GM10248 (cell line): ENCODE measurements at regions of chr11 and their contacts with region 1.

Region 1: GRCh38 chr11:34830648-34831047 is 85.5 kb downstream of the APIP start:
- DNase-seq: no peak
- CTCF ChIP-seq: no peak

Region 2: DNA sequence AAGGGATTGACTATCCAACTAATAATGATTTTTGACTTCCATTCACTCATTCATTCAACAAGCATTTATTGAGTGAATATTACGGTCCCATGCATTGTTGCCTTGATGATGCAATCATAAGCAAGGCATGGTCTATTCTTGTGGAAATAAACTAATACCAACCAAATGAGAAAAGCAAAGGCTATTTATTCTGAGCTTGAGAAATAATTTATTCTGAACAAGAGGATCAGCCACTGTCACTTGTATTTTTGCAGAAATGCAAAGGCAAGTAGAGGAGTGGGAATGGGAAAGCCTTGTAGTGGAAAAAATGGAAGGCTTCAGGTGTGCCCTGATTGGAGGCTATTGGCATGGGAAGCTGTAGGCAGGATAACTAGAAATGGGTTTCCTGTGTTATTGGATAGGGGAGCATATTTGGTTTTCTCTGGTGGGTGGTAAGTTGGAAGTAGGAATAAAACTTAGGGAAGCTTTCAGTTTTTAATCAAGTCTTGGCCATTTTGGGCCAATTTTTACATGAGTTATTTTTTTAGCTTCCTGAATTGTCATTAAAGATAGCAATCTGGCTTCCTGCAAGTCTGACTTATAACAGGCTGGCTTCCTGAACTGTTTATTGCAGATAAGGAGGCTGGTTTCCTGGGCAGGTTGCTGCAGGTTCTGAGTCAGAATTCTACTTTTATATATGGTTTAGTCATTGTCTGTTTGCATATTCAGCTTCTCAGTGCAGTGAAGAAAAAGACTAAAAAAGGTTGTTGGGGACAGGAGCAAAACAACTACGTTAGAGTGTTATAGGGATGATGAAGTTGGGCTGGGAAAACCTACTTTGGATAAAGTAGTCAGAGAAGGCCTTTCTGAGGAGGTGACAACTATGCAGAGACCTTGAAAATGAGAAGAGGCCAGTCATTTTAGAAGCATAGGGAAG is 21.2 kb before region 1 on chr11:
- CTCF ChIA-PET with region 1: no interaction called
- POLR2A ChIA-PET with region 1: no interaction called
- DNase-seq: no peak
- CTCF ChIP-seq: no peak

Region 3: DNA sequence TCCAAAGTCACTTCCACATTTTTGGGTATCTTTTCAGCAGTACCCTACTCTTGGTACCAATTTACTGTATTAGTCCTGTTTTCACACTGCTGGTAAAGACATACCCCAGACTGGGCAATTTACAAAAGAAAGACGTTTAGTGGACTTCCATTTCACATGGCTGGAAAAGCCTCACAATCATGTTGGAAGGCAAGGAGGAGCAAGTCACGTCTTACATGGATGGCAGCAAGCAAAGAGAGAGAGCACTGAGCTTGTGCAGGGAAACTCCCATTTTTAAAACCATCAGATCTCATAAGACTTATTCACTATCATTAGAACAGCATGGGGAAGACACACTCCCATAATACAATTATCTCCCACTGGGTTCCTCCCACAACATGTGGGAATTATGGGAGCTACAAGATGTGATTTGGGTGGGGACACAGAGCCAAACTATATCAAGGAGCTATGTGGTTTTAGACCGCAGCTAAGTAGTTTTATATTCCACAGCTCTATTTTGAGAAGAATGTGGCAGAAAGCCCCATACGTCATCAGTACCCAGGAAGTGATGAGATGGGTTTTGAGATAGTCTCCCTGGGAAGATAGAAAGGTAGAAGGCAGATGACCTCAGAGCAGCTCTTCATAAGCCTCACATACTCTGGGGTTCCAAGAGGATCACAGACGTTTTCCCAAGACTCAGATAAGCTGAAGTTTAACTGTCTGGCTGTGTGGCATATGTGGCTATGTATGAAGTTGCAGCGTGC is 10.7 kb before region 1 on chr11:
- CTCF ChIA-PET with region 1: no interaction called
- POLR2A ChIA-PET with region 1: no interaction called
- DNase-seq: no peak
- CTCF ChIP-seq: no peak

Region 4: DNA sequence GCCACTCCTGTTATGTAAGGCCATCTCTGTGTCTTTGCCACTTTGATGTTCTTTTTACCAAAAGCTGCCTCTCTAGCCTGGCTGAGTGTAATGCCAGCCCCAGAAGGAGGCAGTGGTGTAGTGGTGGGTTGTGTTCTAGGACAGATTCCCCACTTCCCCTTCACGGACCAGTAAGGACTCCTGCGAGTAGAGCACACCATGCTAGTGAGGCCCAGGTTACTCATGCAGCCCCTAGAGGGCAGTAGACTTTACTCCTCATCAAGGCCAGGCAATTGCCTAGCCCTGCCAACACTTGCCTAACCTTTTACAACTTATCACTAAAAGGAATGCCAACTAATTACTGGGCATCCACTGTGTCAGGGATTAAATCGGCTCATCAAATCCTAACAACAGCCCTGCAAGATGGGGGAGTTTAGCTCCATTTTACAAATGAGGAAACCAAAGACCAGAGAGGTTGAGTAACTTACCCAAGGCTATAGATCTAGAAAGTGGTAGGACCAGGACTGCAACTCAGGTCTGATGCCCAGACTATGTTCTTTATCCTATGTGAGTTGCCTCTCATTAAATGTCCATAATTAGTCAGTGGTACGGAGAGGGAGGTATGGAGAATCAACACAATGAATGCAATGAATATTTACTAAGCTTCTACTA is 10.2 kb after region 1 on chr11:
- CTCF ChIA-PET with region 1: interaction called, 13 read pairs
- POLR2A ChIA-PET with region 1: no interaction called
- DNase-seq: peak; percentile 52
- CTCF ChIP-seq: peak; percentile 53